ENCODE measurements at regions of chr11 and their contacts with region 1.

Region 1: GRCh38 chr11:17978553-17979287 is 34.1 kb downstream of the SERGEF start:
- DNase-seq: no peak

Region 2: GRCh38 chr11:17598700-17599459 is 379.8 kb before region 1 on chr11:
- intact Hi-C with region 1: loop called (anchors 2 kb)
- DNase-seq: peak; percentile 77

Region 3: GRCh38 chr11:17730608-17731462 is 247.9 kb before region 1 on chr11:
- intact Hi-C with region 1: loop called (anchors 1 kb)
- DNase-seq: peak; percentile 89

Region 4: DNA sequence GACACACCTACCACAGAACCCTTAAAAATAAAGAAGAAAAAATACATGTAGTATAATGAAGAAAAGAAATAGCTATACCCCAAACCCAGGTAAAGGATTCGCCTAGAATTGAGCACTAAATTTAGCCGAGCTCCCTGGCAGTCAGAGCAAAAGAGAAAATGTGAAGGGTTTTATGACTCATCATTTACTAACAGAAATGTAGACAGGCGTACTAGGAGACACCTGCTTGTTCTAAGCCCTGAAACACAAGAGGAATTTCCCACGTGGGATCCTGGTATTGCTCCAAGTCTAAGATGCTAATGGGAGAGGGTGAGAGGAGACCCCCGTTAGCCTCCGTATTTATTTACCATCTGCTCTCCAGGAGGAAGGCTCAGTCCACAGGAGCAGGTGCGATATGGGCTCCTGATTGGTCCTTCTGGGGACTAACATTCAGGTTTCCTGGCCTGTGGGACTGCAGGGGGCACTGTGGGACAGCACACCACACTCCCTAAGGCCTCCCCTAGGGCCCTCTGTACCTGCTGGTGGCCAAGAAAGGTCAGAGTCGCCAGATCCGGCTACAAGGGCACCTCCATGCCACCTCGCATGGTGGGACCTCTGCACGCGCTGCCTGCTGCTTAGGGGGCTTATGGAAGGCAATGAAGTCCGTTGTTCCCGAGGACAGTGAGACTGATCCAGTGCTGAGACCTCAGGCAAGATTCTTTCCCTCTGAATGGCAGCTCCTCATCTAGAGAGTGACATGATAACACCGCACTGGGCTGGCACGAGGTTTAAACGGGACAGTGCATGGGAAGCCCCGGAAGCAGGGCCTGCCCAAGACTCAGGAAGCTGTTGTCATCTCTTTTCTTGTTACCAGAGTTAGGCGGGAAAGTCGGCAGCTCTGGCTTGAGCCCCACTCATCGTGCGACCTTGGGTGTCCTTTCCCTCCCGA is 218.4 kb before region 1 on chr11:
- intact Hi-C with region 1: loop called (anchors 1 kb)
- DNase-seq: no peak

Region 5: DNA sequence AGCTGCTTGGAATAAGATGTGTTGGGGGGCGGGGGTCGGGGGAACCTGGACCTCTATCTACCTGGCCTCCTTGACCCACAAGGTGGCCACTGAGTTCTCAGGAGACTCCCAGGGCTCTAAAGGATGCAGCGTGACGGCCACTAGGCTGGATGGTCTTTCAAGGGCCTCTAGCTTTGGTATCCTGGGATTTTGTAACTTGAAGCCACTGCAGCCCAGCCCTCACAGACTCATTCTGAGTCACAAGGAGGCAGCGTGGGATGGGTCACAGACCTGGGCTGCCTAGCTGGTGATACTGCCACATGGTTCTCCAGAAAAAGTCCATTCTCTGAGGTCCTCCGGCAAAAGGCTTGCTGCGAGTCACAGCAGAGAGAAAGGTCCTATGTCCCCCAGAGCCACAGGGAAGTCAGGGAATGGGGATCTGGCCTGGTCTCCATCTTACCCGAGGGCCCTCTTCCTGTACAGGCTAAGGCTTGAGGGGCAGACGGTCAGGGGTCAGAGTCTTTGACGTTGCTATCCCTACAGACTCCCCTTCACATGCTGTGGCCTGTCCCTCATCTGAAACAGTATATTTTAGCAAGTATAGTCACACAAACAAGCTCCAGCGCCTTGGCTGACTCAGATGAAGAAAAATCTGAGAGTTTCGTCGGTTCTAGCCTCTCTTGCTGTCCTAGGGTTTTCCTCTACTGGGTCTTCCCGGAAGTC is 191.7 kb before region 1 on chr11:
- intact Hi-C with region 1: no loop called
- DNase-seq: no peak

Region 6: GRCh38 chr11:17827006-17827405 is 151.7 kb before region 1 on chr11:
- intact Hi-C with region 1: loop called (anchors 5 kb)
- DNase-seq: no peak